Common myeloid progenitor, CD34-positive (primary cell): ENCODE measurements at regions of chr7 and their contacts with region 1.

Region 1: DNA sequence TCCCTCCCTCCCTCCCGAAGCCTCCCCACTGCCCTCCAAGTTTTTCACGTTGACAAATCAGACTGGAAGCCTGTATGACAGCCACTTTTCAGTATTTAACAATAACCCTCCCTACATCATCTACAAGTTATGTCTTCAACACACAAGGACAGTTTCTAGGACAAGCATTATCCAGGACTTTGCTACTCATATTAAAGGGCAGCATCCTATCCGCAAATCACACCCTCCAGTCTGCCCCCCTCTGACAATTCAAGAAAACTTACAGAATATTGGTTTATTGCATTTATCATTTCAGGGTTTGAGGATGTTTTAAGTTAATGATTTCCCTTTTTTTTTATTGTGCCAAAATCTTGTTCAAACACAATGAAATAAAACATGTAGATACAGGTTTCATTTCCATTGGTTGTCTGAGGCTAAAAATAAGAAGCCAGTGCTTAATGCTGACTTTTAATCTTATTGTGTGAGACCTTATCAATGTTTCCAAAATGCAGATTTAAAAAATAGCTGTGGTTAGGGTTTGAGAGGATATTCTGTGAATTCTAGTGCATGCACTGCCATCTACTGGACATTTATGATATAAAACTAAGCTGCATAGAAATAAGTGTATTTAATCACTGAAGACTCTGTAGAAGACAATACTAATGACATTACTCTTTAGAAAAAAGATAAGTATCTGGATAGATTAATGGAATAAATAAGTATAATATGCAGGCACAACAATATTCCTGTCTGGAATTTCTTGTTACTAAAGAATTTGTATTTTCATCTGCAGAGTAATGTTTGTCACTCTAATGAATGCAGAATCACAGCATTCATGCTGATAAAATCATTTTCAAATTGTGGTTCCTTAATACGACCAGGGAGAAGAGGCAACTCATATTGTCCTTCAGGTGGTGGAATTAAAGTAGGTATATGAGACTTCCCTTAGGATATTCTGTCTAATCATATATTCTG is 64.1 kb downstream of the CAV1 start:
- DNase-seq: peak; percentile 61 to 73 (median 66)
- H3K4me3 ChIP-seq: no peak overlapping the region
- H3K27ac ChIP-seq: no peak overlapping the region
- H3K4me1 ChIP-seq: peaks cover 20 to 38% (median 26%) of the 10 kb centered on the region in 4 experiments
- H3K27me3 ChIP-seq: no peaks in the 10 kb centered on the region

Region 2: GRCh38 chr7:116265881-116266280 is 323.0 kb before region 1 on chr7:
- CTCF ChIA-PET with region 1: interaction called, 68 read pairs
- POLR2A ChIA-PET with region 1: no interaction called
- DNase-seq: no peak
- H3K4me3 ChIP-seq: no peak overlapping the region
- H3K27ac ChIP-seq: no peak overlapping the region
- H3K4me1 ChIP-seq: no peaks in the 10 kb centered on the region
- H3K27me3 ChIP-seq: no peaks in the 10 kb centered on the region

Region 3: DNA sequence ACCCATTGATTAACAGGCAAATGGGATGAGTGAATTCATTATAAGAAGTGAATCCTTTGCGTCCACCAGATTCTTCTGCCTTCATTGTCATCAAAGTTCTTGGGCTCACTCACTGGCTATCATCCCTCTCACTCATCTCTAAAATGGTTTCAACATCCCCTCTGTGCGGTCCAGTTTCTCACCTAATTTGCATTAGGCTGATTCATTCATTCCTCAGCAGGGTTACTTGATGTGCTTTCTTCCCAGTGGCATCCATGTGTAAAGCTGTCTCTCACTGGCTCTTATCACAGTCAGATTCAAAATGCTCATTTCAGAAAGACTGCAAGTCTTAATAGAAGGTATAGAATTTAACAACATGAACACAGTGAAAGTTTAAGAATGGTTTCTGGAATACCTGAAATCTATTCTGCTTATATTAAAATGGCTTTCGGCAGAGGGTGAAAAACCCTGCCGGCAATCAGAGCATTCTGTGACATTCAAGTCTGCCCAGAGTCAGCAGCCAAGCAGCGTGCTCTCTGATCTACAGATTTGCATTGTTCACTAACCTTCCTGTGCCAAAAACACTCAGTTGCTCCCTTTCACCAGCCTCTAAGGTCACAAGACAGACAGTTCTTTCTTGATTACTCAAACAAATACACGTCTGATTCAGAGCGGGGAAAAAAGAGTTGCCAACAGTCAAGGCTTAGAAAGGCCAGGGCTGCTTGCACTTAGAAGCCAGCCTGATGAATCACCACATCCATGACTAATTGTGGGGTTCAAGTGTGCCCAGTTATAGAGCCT is 271.9 kb before region 1 on chr7:
- CTCF ChIA-PET with region 1: no interaction called
- POLR2A ChIA-PET with region 1: no interaction called
- DNase-seq: no peak
- H3K4me3 ChIP-seq: no peak overlapping the region
- H3K27ac ChIP-seq: no peak overlapping the region
- H3K4me1 ChIP-seq: no peaks in the 10 kb centered on the region
- H3K27me3 ChIP-seq: no peaks in the 10 kb centered on the region

Region 4: GRCh38 chr7:116601426-116601825 is 12.5 kb after region 1 on chr7:
- CTCF ChIA-PET with region 1: interaction called, 37 read pairs
- POLR2A ChIA-PET with region 1: no interaction called
- DNase-seq: peak in 1 of 3 donors; percentile 8
- H3K4me3 ChIP-seq: no peak overlapping the region
- H3K27ac ChIP-seq: no peak overlapping the region
- H3K4me1 ChIP-seq: no peaks in the 10 kb centered on the region
- H3K27me3 ChIP-seq: no peaks in the 10 kb centered on the region

Region 5: DNA sequence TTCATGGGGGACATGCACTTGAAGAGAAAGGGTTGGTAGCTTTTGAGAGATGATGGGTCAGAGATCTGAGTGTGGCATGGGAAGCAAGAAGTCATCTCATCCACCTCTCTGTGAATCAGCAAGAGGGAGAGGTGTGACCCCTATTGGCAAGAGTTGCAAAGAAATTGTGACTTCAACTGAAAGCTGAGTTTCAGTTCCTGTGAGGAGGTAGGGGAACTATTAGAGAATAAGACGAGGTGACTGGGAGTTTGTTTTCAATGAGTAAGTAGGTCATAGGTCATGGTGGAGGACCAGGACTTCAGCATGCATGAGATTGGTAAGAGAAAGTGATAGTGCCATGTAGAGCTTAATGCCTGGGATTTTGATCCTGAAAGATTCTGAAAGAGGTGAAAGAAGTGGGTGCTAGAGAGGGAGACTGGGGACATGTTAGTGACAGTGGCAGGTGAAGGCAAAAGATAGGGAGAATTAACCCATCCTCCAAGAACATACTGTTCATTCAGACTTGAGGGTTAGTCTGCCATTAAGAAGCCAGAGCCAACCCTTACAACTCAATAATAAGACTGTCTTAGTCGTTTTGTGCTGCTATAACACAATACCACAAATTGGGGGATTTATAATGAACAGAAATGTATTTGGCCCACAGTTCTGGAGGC is 198.0 kb after region 1 on chr7:
- CTCF ChIA-PET with region 1: interaction called, 14 read pairs
- POLR2A ChIA-PET with region 1: no interaction called
- DNase-seq: peak; percentile 43 to 70 (median 69)
- H3K4me3 ChIP-seq: no peak overlapping the region
- H3K27ac ChIP-seq: no peak overlapping the region
- H3K4me1 ChIP-seq: no peaks in the 10 kb centered on the region
- H3K27me3 ChIP-seq: no peaks in the 10 kb centered on the region

Region 6: DNA sequence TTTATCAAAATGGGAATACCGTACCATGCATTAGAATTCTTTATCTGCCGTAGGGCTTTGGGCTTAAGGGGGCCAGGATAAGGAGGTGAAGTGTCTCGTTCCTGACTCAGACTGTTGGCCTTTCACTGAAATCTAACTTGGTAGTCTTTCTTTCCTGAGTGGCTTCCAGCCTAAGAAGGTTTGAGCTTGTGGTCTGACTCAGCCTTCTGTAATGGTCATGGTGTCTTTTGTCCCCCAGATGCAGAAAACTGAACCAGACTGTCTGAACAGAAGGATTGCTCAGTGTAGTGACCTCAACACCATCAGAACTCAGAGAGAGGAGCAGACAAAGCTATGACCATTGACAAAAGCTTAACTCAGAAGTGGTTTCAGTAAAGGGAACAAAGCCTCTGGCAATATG is 694.5 kb after region 1 on chr7:
- CTCF ChIA-PET with region 1: no interaction called
- POLR2A ChIA-PET with region 1: no interaction called
- DNase-seq: no peak
- H3K4me3 ChIP-seq: no peak overlapping the region
- H3K27ac ChIP-seq: no peak overlapping the region
- H3K4me1 ChIP-seq: no peaks in the 10 kb centered on the region
- H3K27me3 ChIP-seq: peaks cover 0 to 2% (median 0%) of the 10 kb centered on the region in 5 experiments